Spleen (tissue), 13 donors: ENCODE measurements at regions of chr1 and their contacts with region 1.

Region 1: DNA sequence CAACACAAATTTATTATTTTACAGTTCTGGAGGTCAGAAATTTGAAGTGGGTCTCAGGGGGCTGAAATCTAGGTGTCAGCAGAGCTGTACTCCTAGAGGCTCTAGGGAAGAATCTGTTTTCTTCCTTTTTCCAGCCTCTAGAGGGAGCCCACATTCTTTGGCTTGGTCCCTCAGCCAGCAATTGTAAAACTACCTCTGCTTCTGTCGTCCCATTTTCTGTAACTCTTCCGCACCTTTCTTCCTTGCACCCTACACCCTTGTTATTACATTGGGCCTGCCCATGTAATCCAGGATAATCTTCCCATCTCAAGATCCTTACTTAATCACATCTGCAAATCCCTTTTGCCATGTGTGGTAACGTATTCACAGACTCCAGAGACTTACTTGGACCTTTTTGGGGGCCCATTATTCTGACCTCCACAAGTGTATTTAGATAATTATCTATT is 24.8 kb upstream of the THEM4 start:
- DNase-seq: no peak
- H3K4me3 ChIP-seq: no peak overlapping the region
- H3K27ac ChIP-seq: no peak overlapping the region
- H3K4me1 ChIP-seq: peaks cover 0 to 5% (median 0%) of the 10 kb centered on the region in 6 donors
- H3K27me3 ChIP-seq: no peaks in the 10 kb centered on the region
- CTCF ChIP-seq: peak; percentile 28 to 82 (median 72)
- POLR2A ChIP-seq: no peak

Region 2: DNA sequence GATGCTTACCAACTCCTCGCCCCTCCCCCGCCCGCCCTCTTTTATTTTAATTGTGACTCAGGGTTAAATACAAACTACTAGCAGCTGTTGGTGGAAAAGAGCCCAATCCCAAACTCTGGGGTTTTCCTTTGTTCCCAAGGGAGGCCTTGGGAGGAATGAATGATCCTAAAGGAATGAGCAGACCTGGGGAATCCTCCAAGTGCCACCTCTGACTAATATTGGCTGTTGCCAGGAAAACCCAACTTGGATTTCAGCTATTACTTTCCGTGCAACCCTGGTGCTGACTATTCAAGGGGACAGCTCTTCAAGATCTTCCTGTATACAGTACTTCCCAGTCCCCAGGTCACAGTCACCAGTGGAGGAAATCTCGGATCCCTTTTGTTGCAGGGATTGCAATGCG is 60.9 kb after region 1 on chr1:
- intact Hi-C with region 1: loop called (anchors 5 kb)
- DNase-seq: no peak
- H3K4me3 ChIP-seq: no peak overlapping the region
- H3K27ac ChIP-seq: peak overlapping the region in 4 of 8 donors; percentile 16 to 89 (median 68)
- H3K4me1 ChIP-seq: peaks cover 12 to 60% (median 45%) of the 10 kb centered on the region in 6 donors
- H3K27me3 ChIP-seq: peaks cover 0 to 25% (median 3%) of the 10 kb centered on the region in 7 donors
- CTCF ChIP-seq: no peak
- POLR2A ChIP-seq: no peak

Region 3: GRCh38 chr1:152252157-152252556 is 318.1 kb after region 1 on chr1:
- intact Hi-C with region 1: no loop called
- DNase-seq: no peak
- H3K4me3 ChIP-seq: no peak overlapping the region
- H3K27ac ChIP-seq: no peak overlapping the region
- H3K4me1 ChIP-seq: no peaks in the 10 kb centered on the region
- H3K27me3 ChIP-seq: no peaks in the 10 kb centered on the region
- CTCF ChIP-seq: no peak
- POLR2A ChIP-seq: no peak